PC-9 (cell line): ENCODE measurements at regions of chr12 and their contacts with region 1.

Region 1: GRCh38 chr12:89949457-89950195 is 241.0 kb upstream of the ATP2B1 start:
- DNase-seq: peak in 1 of 2 experiments; percentile 77
- H3K4me3 ChIP-seq: no peak overlapping the region
- H3K27ac ChIP-seq: peak overlapping the region; percentile 43
- H3K4me1 ChIP-seq: peaks cover 49% of the 10 kb centered on the region
- H3K27me3 ChIP-seq: no peaks in the 10 kb centered on the region
- CTCF ChIP-seq: no peak

Region 2: DNA sequence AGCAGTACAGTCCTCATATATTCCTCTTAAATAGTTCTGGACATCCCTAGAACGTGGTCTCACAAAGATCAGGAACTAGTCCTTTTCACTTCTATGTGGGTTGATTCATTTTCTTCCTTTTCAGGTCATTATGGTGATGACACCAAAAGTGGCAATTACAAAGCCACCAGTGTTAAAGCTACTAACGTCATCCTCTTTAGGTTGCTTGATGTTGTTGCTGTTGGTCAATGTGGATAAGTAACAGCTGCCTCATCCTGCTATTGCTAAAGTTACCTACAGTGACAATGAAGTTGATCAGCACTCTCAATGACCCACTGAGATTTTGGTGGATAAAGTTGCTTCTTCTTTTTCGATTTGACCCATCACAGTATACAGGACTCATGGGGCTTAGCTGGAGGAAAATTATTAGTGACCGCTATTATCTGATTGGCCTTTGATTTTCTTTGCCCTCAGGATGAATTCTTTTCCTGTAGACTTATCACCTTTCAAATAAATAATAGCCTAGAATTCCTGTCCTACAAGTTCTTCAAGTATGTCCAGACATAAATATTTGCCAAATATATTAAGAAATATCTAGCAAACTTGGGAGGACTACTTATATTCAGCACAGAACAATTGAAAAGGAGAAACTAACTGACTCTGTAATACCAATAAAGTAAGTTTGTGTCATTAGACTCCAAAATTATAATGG is 187.0 kb before region 1 on chr12:
- CTCF ChIA-PET with region 1: no interaction called
- POLR2A ChIA-PET with region 1: no interaction called
- intact Hi-C with region 1: loop called (anchors 2 kb)
- DNase-seq: peak; percentile 14 to 96
- H3K4me3 ChIP-seq: peak overlapping the region; percentile 15; the same call in 1 of the 2 replicates
- H3K27ac ChIP-seq: peak overlapping the region; percentile 95
- H3K4me1 ChIP-seq: peaks cover 43% of the 10 kb centered on the region
- H3K27me3 ChIP-seq: no peaks in the 10 kb centered on the region
- CTCF ChIP-seq: no peak